Panc1 (cell line): ENCODE measurements at regions of chr17 and their contacts with region 1.

Region 1: GRCh38 chr17:79543531-79543930 is 67.3 kb downstream of the RBFOX3 start:
- DNase-seq: no peak
- ATAC-seq: no peak
- H3K4me3 ChIP-seq: no peak overlapping the region
- H3K27ac ChIP-seq: no peak overlapping the region
- H3K4me1 ChIP-seq: no peaks in the 10 kb centered on the region
- H3K27me3 ChIP-seq: peaks cover 9% of the 10 kb centered on the region
- CTCF ChIP-seq: no peak

Region 2: GRCh38 chr17:79356839-79357447 is 186.6 kb before region 1 on chr17:
- CTCF ChIA-PET with region 1: no interaction called
- POLR2A ChIA-PET with region 1: interaction called, 10 read pairs
- in situ Hi-C with region 1: no loop called
- intact Hi-C with region 1: no loop called
- DNase-seq: no peak
- ATAC-seq: no peak
- H3K4me3 ChIP-seq: no peak overlapping the region
- H3K27ac ChIP-seq: no peak overlapping the region
- H3K4me1 ChIP-seq: no peaks in the 10 kb centered on the region
- H3K27me3 ChIP-seq: peaks cover 49% of the 10 kb centered on the region
- CTCF ChIP-seq: no peak

Region 3: GRCh38 chr17:79374087-79374689 is 169.3 kb before region 1 on chr17:
- CTCF ChIA-PET with region 1: no interaction called
- POLR2A ChIA-PET with region 1: no interaction called
- in situ Hi-C with region 1: no loop called
- intact Hi-C with region 1: no loop called
- DNase-seq: no peak
- ATAC-seq: no peak
- H3K4me3 ChIP-seq: no peak overlapping the region
- H3K27ac ChIP-seq: no peak overlapping the region
- H3K4me1 ChIP-seq: no peaks in the 10 kb centered on the region
- H3K27me3 ChIP-seq: peaks cover 26% of the 10 kb centered on the region; the same call in 1 of the 2 replicates
- CTCF ChIP-seq: no peak

Region 4: GRCh38 chr17:79531191-79532095 is 12.1 kb before region 1 on chr17:
- CTCF ChIA-PET with region 1: no interaction called
- POLR2A ChIA-PET with region 1: no interaction called
- in situ Hi-C with region 1: no loop called
- intact Hi-C with region 1: no loop called
- DNase-seq: no peak
- ATAC-seq: no peak
- H3K4me3 ChIP-seq: no peak overlapping the region
- H3K27ac ChIP-seq: no peak overlapping the region
- H3K4me1 ChIP-seq: no peaks in the 10 kb centered on the region
- H3K27me3 ChIP-seq: peaks cover 19% of the 10 kb centered on the region
- CTCF ChIP-seq: no peak

Region 5: DNA sequence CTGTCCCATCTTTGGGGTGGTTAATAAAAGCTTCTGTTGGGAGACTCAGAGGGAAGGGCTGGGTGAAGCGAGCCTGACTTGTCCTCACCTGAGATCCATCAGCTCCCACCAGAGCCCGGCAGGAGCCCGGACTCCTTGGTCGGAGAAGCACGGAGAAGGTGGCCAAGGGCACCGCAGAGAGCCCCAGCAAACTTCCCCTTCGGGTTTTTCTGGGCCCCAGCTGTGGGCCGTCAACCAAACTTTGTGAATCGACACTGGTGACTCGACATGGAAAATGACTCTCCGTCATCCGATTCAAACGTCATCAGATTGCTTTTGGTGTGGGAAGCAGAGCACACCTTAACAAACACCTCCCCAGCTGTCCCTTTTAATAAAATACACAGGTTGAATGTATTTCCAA is 208.6 kb after region 1 on chr17:
- CTCF ChIA-PET with region 1: no interaction called
- POLR2A ChIA-PET with region 1: no interaction called
- in situ Hi-C with region 1: no loop called
- intact Hi-C with region 1: no loop called
- DNase-seq: no peak
- ATAC-seq: no peak
- H3K4me3 ChIP-seq: no peak overlapping the region
- H3K27ac ChIP-seq: no peak overlapping the region
- H3K4me1 ChIP-seq: peaks cover 1% of the 10 kb centered on the region; the same call in 1 of the 2 replicates
- H3K27me3 ChIP-seq: 0 out of 2 replicates have a peak, but pooled peaks cover 3% of the 10 kb centered on the region
- CTCF ChIP-seq: no peak